H1 (cell line): ENCODE measurements at regions of chrX and their contacts with region 1.

Region 1: DNA sequence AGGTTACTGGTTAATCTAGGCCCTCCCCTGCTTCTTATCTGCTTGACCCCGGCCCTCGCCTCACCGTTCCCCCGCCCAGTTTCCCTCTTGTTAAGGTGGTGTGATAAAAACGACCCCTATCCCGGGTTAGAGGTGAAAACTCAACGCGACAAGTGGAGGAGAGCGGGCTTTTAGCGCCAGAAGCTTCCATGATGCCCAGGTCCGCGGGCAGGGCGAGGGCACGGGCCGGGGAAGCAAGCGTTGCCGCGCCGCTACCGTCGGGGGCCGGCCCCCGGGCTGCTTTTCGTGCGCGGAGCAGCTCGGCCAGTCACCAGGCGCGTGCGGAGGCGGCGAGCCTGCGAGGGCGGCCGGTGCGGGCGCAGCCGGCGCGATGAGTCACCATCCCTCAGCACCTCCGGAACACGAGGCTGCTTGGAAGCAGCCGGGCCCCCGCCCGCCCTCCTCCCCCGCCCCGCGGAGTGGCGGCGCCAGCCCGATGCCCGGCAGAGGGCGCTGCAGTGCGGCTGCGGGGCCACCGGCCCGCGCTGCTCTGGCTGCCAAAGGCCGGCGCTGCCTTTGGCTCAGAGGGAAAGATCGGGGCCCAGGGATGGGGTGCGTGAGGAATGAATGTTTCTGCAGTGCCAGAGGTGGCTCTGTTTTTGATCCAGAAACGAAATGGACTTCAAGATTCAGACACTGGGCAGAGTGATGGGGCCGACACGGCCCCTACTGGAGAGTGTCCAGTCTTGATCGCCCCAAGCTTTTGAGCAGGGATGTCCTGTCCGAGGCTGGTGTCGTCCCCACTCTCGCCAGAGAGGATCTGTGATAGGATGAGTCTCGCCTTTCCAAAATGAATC is 107.8 kb downstream of the NHSL2 start:
- DNase-seq: peak; percentile 43 to 84
- H3K4me3 ChIP-seq: peak overlapping the region; percentile 6 to 48 (median 16); a peak in 5 of 8 replicates
- H3K27ac ChIP-seq: no peak overlapping the region; the same call in 1 of the 2 replicates
- H3K4me1 ChIP-seq: peaks cover 0 to 7% (median 1%) of the 10 kb centered on the region in 4 experiments; a peak in 3 of 7 replicates
- H3K27me3 ChIP-seq: peaks cover 0 to 2% (median 0%) of the 10 kb centered on the region in 4 experiments; a peak in 3 of 7 replicates
- CTCF ChIP-seq: peak; percentile 50 to 77 (median 53)
- EP300 ChIP-seq: no peak
- POLR2A ChIP-seq: no peak
- RAD21 ChIP-seq: peak; percentile 57 to 76

Region 2: GRCh38 chrX:71935476-71935875 is 83.0 kb before region 1 on chrX:
- CTCF ChIA-PET with region 1: no interaction called
- POLR2A ChIA-PET with region 1: no interaction called
- DNase-seq: no peak
- H3K4me3 ChIP-seq: no peak overlapping the region; a peak in 1 of 8 replicates
- H3K27ac ChIP-seq: peak overlapping the region; percentile 73
- H3K4me1 ChIP-seq: peaks cover 4 to 15% (median 10%) of the 10 kb centered on the region in 4 experiments; a peak in 5 of 7 replicates
- H3K27me3 ChIP-seq: no peaks in the 10 kb centered on the region
- CTCF ChIP-seq: no peak
- EP300 ChIP-seq: no peak
- POLR2A ChIP-seq: no peak
- RAD21 ChIP-seq: 0 out of 4 replicates have a peak, but pooled peaks of 1 of the 2 experiments have one; percentile 7

Region 3: GRCh38 chrX:72003811-72004750 is 14.4 kb before region 1 on chrX:
- CTCF ChIA-PET with region 1: interaction called, 25 read pairs
- POLR2A ChIA-PET with region 1: interaction called, 3 read pairs
- DNase-seq: peak; percentile 49 to 58
- H3K4me3 ChIP-seq: peak overlapping the region in 2 of 4 experiments; percentile 6 to 42; a peak in 1 of 8 replicates
- H3K27ac ChIP-seq: no peak overlapping the region
- H3K4me1 ChIP-seq: peaks cover 1 to 10% (median 7%) of the 10 kb centered on the region in 4 experiments; a peak in 4 of 7 replicates
- H3K27me3 ChIP-seq: no peaks in the 10 kb centered on the region
- CTCF ChIP-seq: peak; percentile 57 to 73 (median 66)
- EP300 ChIP-seq: peak in 1 of 2 experiments; percentile 9; a peak in 1 of 3 replicates
- POLR2A ChIP-seq: no peak
- RAD21 ChIP-seq: peak; percentile 80 to 88

Region 4: GRCh38 chrX:72038016-72038415 is 19.5 kb after region 1 on chrX:
- CTCF ChIA-PET with region 1: interaction called, 13 read pairs
- POLR2A ChIA-PET with region 1: no interaction called
- DNase-seq: no peak
- H3K4me3 ChIP-seq: no peak overlapping the region
- H3K27ac ChIP-seq: no peak overlapping the region
- H3K4me1 ChIP-seq: no peaks in the 10 kb centered on the region
- H3K27me3 ChIP-seq: no peaks in the 10 kb centered on the region
- CTCF ChIP-seq: no peak
- EP300 ChIP-seq: no peak
- POLR2A ChIP-seq: no peak
- RAD21 ChIP-seq: no peak

Region 5: GRCh38 chrX:72045552-72046277 is 27.2 kb after region 1 on chrX:
- CTCF ChIA-PET with region 1: interaction called, 13 read pairs
- POLR2A ChIA-PET with region 1: interaction called, 6 read pairs
- DNase-seq: peak in 1 of 2 experiments; percentile 25
- H3K4me3 ChIP-seq: peak overlapping the region in 1 of 4 experiments; percentile 26; a peak in 1 of 8 replicates
- H3K27ac ChIP-seq: peak overlapping the region; percentile 83
- H3K4me1 ChIP-seq: peaks cover 6 to 12% (median 8%) of the 10 kb centered on the region in 4 experiments; a peak in 6 of 7 replicates
- H3K27me3 ChIP-seq: no peaks in the 10 kb centered on the region
- CTCF ChIP-seq: no peak
- EP300 ChIP-seq: no peak
- POLR2A ChIP-seq: peak in 1 of 2 experiments; percentile 51; a peak in 2 of 3 replicates
- RAD21 ChIP-seq: no peak

Region 6: GRCh38 chrX:72060196-72060920 is 41.9 kb after region 1 on chrX:
- CTCF ChIA-PET with region 1: interaction called, 23 read pairs
- POLR2A ChIA-PET with region 1: no interaction called
- DNase-seq: peak in 1 of 2 experiments; percentile 52
- H3K4me3 ChIP-seq: no peak overlapping the region
- H3K27ac ChIP-seq: no peak overlapping the region
- H3K4me1 ChIP-seq: peaks cover 0 to 2% (median 0%) of the 10 kb centered on the region in 4 experiments; a peak in 1 of 7 replicates
- H3K27me3 ChIP-seq: no peaks in the 10 kb centered on the region
- CTCF ChIP-seq: no peak
- EP300 ChIP-seq: no peak
- POLR2A ChIP-seq: no peak
- RAD21 ChIP-seq: peak; percentile 35 to 45

Region 7: DNA sequence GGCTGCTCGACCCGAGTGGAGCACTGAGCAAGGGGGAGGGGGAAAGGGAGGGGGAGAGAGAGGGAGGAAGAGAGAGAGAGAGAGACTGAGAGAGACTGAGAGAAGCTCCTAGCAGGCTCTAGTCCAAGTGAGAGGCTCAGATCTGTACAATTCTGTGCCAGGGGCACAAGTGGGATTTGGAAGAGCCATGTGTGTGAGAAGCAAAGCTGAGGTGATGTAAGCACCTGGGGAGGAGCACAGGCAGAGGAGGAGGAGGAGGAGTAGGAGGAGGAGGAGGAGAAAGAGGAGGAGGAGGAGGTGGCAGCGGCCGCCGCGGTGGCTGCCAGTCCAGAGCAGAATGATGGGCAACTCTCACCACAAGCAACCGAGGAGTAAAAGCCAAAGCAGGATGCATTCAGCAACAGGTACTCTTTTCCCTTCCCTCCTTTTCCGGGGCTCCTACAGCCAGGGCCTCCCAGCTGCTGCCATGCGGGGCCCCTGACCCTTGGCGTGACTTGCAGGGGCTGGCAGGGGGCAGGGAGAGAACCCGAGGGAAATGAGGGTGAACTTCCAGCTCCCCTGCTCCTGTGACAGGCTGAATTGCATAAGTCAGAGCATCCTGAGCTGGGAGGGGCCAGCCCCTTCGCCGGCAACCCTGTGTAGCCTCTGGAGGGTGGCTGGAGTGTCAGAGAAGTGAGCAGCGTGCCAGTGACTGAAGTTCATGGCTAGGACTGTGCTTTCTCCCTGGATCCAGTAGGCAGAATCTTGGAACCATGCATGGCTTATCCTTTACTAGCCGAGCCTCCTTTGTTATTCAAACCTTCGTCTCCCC is 51.1 kb after region 1 on chrX:
- CTCF ChIA-PET with region 1: interaction called, 23 read pairs
- POLR2A ChIA-PET with region 1: no interaction called
- DNase-seq: no peak
- H3K4me3 ChIP-seq: 0 out of 8 replicates have a peak overlapping the region, but pooled peaks of 1 of the 4 experiments have one; percentile 19
- H3K27ac ChIP-seq: no peak overlapping the region
- H3K4me1 ChIP-seq: peaks cover 0 to 11% (median 4%) of the 10 kb centered on the region in 4 experiments; a peak in 4 of 7 replicates
- H3K27me3 ChIP-seq: no peaks in the 10 kb centered on the region
- CTCF ChIP-seq: no peak
- EP300 ChIP-seq: no peak
- POLR2A ChIP-seq: no peak
- RAD21 ChIP-seq: no peak

Region 8: DNA sequence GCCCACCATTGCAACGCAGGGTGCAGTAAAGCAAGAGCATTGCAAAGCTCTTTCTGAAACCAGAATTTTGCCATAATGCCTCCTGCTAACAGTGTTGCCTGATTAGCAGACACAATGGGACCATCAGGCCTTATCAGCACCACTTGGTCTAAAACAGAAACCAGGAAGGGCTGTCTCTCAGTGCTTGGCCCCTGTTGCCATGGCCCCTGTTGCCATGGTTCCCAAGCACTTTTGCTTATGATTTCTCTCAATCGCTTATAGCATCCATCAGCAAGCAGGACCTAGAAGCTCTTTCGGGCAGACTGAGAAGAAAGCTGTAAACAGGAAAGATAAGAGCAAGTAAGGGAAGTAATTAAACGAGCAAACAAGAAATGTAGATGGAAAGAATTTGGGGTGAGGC is 76.4 kb after region 1 on chrX:
- CTCF ChIA-PET with region 1: no interaction called
- POLR2A ChIA-PET with region 1: no interaction called
- DNase-seq: no peak
- H3K4me3 ChIP-seq: no peak overlapping the region
- H3K27ac ChIP-seq: no peak overlapping the region
- H3K4me1 ChIP-seq: peaks cover 0 to 4% (median 1%) of the 10 kb centered on the region in 4 experiments; a peak in 2 of 7 replicates
- H3K27me3 ChIP-seq: no peaks in the 10 kb centered on the region
- CTCF ChIP-seq: no peak
- EP300 ChIP-seq: no peak
- POLR2A ChIP-seq: no peak
- RAD21 ChIP-seq: no peak

Region 9: DNA sequence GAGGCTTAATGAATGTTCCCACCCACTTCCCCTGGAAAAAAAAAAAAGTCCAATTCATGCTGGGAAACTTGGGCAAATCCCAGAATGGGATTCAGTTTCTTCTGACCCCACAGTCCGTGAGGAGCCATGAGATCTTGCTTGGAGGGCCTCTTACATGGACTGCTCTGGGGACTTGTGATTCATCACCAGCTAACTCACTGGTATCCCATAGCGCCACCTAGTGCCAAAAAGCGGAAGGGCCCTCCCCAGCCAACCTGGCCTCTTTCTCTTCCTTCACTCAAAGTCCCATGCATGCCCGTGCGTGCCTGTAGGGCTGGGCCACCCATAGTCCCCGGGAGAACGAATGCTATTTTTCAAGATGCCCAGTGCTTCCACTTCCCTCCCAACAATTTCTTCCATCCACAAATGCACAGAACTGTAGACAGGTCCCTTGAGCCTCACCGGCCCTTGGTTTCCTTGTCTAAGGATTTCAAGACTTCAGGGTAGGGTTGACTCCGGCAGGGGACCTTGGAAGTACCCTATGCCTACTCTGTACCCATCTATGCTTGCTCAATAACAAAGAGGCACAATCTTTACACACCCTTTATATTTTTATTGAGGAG is 108.1 kb after region 1 on chrX:
- CTCF ChIA-PET with region 1: interaction called, 51 read pairs
- POLR2A ChIA-PET with region 1: interaction called, 5 read pairs
- DNase-seq: peak; percentile 57 to 90
- H3K4me3 ChIP-seq: no peak overlapping the region
- H3K27ac ChIP-seq: no peak overlapping the region
- H3K4me1 ChIP-seq: peaks cover 6 to 16% (median 11%) of the 10 kb centered on the region in 4 experiments
- H3K27me3 ChIP-seq: peaks cover 12 to 29% (median 24%) of the 10 kb centered on the region in 4 experiments
- CTCF ChIP-seq: peak in 2 of 3 experiments; percentile 72 to 79; a peak in 3 of 4 replicates
- EP300 ChIP-seq: no peak
- POLR2A ChIP-seq: no peak
- RAD21 ChIP-seq: peak; percentile 84 to 86